Caco-2 (cell line): ENCODE measurements at regions of chr2 and their contacts with region 1.

Region 1: GRCh38 chr2:205680067-205680466 is 2.2 kb upstream of the NRP2 start:
- DNase-seq: peak; percentile 80
- H3K4me3 ChIP-seq: no peak overlapping the region
- H3K4me3 Mint-ChIP-seq: no peak overlapping the region
- H3K27ac Mint-ChIP-seq: peak overlapping the region; percentile 24
- H3K4me1 ChIP-seq: peaks cover 62% of the 10 kb centered on the region
- H3K4me1 Mint-ChIP-seq: peaks cover 45% of the 10 kb centered on the region
- H3K27me3 ChIP-seq: no peaks in the 10 kb centered on the region
- H3K27me3 Mint-ChIP-seq: no peaks in the 10 kb centered on the region
- CTCF ChIP-seq: peak; percentile 57 to 61

Region 2: DNA sequence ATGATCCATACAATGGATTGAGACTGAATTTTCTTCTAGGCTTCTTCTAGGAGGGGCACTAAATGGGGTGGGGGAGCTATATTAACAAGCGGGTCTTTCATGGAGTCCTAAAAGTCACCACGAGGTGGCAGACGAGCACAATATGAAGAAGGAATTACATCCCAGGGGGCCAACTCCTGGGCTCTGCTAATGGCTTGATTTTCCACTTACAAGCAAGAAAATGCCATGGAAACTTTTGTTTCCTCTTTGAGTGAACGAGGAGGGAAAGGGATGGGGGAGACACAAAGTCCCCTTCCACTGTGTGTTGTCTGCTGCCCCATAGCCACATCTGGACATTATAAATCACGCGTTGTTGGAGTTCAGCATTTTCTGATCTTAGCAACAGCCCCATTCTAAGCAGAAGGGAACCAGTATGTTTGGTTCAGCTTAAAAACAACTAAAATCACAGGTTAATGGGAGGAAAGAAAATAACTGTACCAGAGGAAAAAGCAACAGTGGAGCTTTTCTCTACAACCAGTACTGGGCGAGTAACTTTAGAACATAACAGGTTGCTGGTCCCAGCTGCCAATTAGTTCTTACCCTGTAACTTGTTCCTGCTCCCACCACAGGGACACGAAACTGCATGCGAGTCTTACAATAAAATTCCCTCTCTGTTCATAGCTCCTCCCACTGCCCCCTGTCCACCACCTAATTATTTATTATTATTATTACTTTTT is 1419.7 kb before region 1 on chr2:
- CTCF ChIA-PET with region 1: interaction called, 3 read pairs
- POLR2A ChIA-PET with region 1: no interaction called
- intact Hi-C with region 1: loop called (anchors 10 kb)
- DNase-seq: peak; percentile 71 to 75
- H3K4me3 ChIP-seq: no peak overlapping the region
- H3K4me3 Mint-ChIP-seq: no peak overlapping the region
- H3K27ac Mint-ChIP-seq: no peak overlapping the region
- H3K4me1 ChIP-seq: peaks cover 9% of the 10 kb centered on the region; the same call in 1 of the 2 replicates
- H3K4me1 Mint-ChIP-seq: peaks cover 26% of the 10 kb centered on the region
- H3K27me3 ChIP-seq: no peaks in the 10 kb centered on the region
- H3K27me3 Mint-ChIP-seq: no peaks in the 10 kb centered on the region
- CTCF ChIP-seq: peak; percentile 81 to 88

Region 3: GRCh38 chr2:204900910-204901309 is 779.2 kb before region 1 on chr2:
- CTCF ChIA-PET with region 1: no interaction called
- POLR2A ChIA-PET with region 1: no interaction called
- intact Hi-C with region 1: loop called (anchors 2 kb)
- DNase-seq: peak; percentile 80 to 86
- H3K4me3 ChIP-seq: no peak overlapping the region
- H3K4me3 Mint-ChIP-seq: peak overlapping the region; percentile 48
- H3K27ac Mint-ChIP-seq: peak overlapping the region; percentile 77
- H3K4me1 ChIP-seq: peaks cover 26% of the 10 kb centered on the region
- H3K4me1 Mint-ChIP-seq: peaks cover 44% of the 10 kb centered on the region
- H3K27me3 ChIP-seq: no peaks in the 10 kb centered on the region
- H3K27me3 Mint-ChIP-seq: no peaks in the 10 kb centered on the region
- CTCF ChIP-seq: no peak

Region 4: GRCh38 chr2:205216580-205216979 is 463.5 kb before region 1 on chr2:
- CTCF ChIA-PET with region 1: no interaction called
- POLR2A ChIA-PET with region 1: no interaction called
- intact Hi-C with region 1: loop called (anchors 2 kb)
- DNase-seq: peak; percentile 46 to 56
- H3K4me3 ChIP-seq: no peak overlapping the region
- H3K4me3 Mint-ChIP-seq: no peak overlapping the region
- H3K27ac Mint-ChIP-seq: peak overlapping the region; percentile 78
- H3K4me1 ChIP-seq: peaks cover 57% of the 10 kb centered on the region
- H3K4me1 Mint-ChIP-seq: peaks cover 46% of the 10 kb centered on the region
- H3K27me3 ChIP-seq: no peaks in the 10 kb centered on the region
- H3K27me3 Mint-ChIP-seq: no peaks in the 10 kb centered on the region
- CTCF ChIP-seq: no peak

Region 5: DNA sequence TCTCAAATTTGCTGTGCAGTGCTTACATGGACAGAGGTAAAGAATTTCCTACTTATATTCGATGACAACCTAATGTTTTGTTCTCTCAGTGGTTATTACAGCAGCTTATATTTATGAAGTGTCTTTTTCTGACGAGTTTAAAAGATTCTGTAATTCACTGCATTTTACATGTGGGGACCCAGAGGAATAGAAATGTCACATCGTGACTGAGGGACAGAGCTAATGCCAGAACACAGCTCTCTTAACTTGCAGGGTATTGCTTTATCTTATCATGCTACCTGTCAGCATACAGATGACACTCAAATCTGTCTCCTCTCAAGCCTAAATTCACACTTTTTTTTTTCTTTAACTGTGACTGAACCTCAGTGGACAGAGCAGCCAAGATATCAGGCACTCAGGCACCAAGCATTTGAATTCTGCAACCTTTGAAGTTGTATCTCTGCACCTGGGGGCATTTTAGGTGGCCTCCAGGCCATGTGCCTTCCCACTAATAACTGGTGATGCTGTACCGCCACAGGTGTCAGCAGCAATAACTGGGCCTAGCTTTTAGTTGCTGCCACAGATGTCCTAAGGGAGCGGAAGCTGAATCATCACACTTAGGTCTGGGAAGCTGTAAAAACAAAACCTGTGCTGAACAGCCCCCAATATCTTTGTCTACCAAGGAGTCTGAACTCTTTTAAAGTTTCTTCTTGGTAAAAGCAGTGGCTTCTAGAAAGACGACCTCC is 313.6 kb before region 1 on chr2:
- CTCF ChIA-PET with region 1: no interaction called
- POLR2A ChIA-PET with region 1: interaction called, 3 read pairs
- intact Hi-C with region 1: loop called (anchors 2 kb)
- DNase-seq: peak; percentile 63 to 82
- H3K4me3 ChIP-seq: no peak overlapping the region
- H3K4me3 Mint-ChIP-seq: peak overlapping the region; percentile 36
- H3K27ac Mint-ChIP-seq: peak overlapping the region; percentile 71
- H3K4me1 ChIP-seq: peaks cover 36% of the 10 kb centered on the region
- H3K4me1 Mint-ChIP-seq: peaks cover 52% of the 10 kb centered on the region
- H3K27me3 ChIP-seq: no peaks in the 10 kb centered on the region
- H3K27me3 Mint-ChIP-seq: no peaks in the 10 kb centered on the region
- CTCF ChIP-seq: no peak

Region 6: DNA sequence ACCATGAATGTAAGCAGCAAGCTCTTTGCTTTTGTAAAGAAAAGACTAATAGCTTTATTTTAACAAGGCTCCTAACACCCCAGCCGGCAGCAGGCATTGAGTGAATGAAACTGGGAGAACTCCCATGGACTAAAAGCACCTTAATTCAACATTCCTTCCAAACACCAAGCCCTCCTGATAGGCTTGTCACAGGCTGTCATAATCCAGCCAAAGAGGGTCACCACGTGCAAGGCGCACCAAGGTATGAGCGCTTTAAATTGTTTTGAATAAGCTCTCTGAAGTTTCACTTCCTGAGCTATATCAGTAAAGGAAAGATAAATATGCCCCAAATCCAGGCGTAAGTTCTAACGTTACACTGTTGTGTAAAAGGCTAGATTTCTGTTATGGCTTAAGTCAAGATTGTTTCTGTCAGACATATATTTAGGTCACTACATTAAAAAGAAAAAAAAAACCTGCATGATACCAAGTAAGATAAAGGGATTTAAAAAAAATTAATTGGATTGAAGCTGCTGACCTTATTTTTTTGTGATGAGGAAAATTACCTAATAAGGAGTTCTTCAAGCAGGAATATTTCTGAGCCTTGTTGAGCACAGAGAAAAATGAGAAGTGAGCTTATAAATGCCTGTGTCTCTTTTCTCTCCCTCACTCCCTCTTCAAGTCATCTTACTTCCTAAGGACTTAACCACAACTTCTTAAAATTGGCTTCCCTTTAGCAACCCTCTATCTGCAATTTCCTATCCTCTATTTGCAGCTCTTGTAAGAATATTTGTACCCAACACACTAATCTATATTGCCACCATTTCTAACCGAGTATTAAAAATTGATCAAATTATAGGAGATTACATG is 133.9 kb before region 1 on chr2:
- CTCF ChIA-PET with region 1: interaction called, 3 read pairs
- POLR2A ChIA-PET with region 1: interaction called, 4 read pairs
- intact Hi-C with region 1: loop called (anchors 5 kb)
- DNase-seq: no peak
- H3K4me3 ChIP-seq: no peak overlapping the region
- H3K4me3 Mint-ChIP-seq: no peak overlapping the region
- H3K27ac Mint-ChIP-seq: no peak overlapping the region
- H3K4me1 ChIP-seq: no peaks in the 10 kb centered on the region
- H3K4me1 Mint-ChIP-seq: peaks cover 7% of the 10 kb centered on the region
- H3K27me3 ChIP-seq: no peaks in the 10 kb centered on the region
- H3K27me3 Mint-ChIP-seq: no peaks in the 10 kb centered on the region
- CTCF ChIP-seq: no peak

Region 7: GRCh38 chr2:205566606-205567168 is 113.4 kb before region 1 on chr2:
- CTCF ChIA-PET with region 1: no interaction called
- POLR2A ChIA-PET with region 1: no interaction called
- intact Hi-C with region 1: no loop called
- DNase-seq: no peak
- H3K4me3 ChIP-seq: no peak overlapping the region
- H3K4me3 Mint-ChIP-seq: no peak overlapping the region
- H3K27ac Mint-ChIP-seq: no peak overlapping the region
- H3K4me1 ChIP-seq: peaks cover 9% of the 10 kb centered on the region; the same call in 1 of the 2 replicates
- H3K4me1 Mint-ChIP-seq: no peaks in the 10 kb centered on the region
- H3K27me3 ChIP-seq: no peaks in the 10 kb centered on the region
- H3K27me3 Mint-ChIP-seq: no peaks in the 10 kb centered on the region
- CTCF ChIP-seq: no peak